ENCODE measurements at regions of chr22 and their contacts with region 1.

Region 1: DNA sequence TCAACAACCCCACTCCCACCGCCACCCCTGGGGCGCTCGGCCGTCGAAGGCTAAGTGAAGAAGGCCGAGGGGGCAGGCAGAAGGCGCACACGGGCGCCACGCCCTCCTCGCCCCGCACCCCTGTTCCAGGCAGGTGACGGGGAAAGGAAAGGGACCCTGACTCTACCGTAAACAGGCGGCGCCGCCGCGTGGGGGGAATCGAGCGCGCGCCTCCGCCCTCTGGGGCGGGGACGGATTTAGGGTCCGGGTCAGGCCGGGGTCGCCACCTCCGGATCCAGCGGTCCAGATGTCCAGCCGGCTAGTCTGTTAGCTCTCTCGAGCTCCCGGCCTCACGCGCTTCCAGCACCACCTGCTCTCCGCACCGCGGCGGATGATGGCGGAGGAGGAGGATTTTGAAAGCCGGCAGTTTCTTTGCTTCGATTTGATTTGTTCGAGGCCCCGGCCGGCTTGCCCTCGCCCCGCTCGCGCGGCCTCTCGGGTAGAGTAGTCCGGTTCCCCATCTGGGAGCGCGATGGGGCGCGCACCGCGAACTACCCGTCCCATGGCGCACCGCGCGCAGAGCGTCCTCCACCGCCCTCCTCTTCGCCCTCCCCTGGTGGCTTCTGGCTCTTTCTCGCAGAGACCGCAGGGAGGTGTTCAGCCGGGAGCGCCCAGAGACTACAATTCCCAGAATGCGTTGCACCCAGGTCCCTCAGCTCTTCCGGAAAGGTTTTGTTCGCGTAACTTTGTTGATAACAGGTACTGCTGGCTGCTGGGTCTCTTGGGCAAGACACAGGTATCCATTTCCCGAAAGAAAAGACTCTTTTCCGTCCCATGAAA is at the start of gene RANGAP1:
- DNase-seq: peak; percentile 98
- H3K4me3 Mint-ChIP-seq: peak within 1 kb of the TSS; percentile 95
- H3K27ac Mint-ChIP-seq: peak within 1 kb of the TSS; percentile 97
- H3K4me1 Mint-ChIP-seq: peaks cover 34% of the 10 kb centered on the region
- H3K27me3 Mint-ChIP-seq: no peaks in the 10 kb centered on the region
- total RNA-seq, gene RANGAP1: 197 and 199 TPM in 2 replicates

Region 2: GRCh38 chr22:40636380-40637182 is 649.4 kb before region 1 on chr22 and contains the start of gene MRTFA:
- intact Hi-C with region 1: loop called (anchors 1 kb)
- DNase-seq: peak; percentile 100
- H3K4me3 Mint-ChIP-seq: peak within 1 kb of the TSS; percentile 94
- H3K27ac Mint-ChIP-seq: peak within 1 kb of the TSS; percentile 94
- H3K4me1 Mint-ChIP-seq: peaks cover 27% of the 10 kb centered on the region
- H3K27me3 Mint-ChIP-seq: no peaks in the 10 kb centered on the region
- total RNA-seq, gene MRTFA: 47.4 and 47.8 TPM in 2 replicates

Region 3: DNA sequence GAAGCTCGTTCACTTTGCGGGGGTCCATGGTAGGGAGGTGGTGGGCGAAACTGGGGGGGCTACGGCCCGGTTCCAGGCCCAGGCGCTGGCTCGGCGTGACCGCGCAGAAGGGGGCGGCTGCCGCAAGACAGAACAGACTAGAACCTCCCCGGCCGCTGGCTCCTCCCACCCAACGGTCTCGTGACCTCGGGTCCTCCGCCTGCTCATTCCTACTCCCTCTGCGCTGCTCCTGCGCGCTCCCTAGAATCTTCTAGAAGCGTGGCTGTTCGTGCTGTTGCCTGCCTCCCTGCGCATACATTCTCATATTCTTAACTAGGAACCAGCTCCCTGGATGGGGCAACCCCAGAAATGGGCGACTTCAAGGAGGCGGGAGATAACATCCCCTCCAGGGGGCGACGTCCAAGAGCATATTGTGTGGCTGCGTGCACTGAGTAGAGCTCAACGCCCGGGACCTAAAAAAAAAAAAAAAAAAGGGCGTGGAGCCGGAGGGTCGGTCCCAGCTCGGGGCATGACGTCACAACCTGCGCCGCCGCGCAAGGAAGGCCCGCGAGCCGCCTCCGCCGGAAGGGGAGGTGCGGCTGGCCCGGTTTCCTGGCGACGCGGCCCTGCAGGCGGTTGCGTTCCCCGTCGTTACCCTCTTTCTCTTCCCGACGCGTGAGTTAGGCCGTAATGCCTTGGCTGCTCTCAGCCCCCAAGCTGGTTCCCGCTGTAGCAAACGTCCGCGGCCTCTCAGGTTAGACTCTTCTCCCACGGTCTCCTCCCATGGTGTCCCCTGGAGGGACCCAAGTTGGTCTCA is 429.3 kb before region 1 on chr22 and contains the starts of genes ST13 and XPNPEP3:
- intact Hi-C with region 1: loop called (anchors 1 kb)
- DNase-seq: peak; percentile 96
- H3K4me3 Mint-ChIP-seq: peak within 1 kb of the TSS; percentile 98
- H3K27ac Mint-ChIP-seq: peak within 1 kb of the TSS; percentile 100
- H3K4me1 Mint-ChIP-seq: peaks cover 38% of the 10 kb centered on the region
- H3K27me3 Mint-ChIP-seq: no peaks in the 10 kb centered on the region
- total RNA-seq, gene ST13: 190 and 192 TPM in 2 replicates
- total RNA-seq, gene XPNPEP3: 14.7 and 15.3 TPM in 2 replicates

Region 4: DNA sequence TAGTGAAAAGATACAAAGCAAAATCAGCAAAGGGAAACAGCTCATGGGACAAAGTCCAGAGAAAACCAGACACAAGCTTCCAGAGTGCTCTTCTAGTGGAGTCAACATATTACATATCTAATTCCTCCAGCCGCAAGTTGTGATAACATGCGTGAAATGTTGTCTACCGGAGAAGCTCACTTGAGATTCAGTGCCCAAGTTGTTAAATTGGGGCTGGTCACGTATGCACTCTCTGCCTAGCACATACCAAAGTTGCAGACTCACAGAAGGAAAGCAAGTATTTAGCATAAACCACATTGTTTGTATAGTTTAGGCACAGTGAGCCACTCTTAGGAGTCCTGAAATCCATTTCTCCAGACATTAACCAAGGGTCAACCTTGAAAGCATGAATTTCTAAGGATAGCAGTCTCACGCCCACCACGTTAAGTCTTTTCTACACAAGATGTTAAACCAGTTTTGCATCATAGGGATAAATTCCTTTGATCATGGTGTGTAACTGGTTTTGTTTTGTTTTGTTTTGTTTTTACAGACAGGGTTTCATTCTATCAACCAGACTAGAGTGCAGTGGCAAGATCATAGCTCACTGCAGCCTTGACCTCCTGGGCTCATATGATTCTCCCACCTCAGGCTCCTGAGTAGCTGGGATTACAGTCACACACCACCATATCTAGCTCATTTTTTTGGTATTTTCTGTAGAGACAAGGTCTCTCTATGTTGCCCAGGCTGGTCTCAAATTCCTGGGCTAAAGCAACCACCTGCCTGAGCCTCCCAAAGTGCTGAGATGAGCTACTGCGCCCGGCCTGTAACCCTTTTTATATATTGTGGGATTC is 233.2 kb before region 1 on chr22:
- intact Hi-C with region 1: no loop called
- DNase-seq: no peak
- H3K4me3 Mint-ChIP-seq: no peak overlapping the region
- H3K27ac Mint-ChIP-seq: no peak overlapping the region
- H3K4me1 Mint-ChIP-seq: peaks cover 7% of the 10 kb centered on the region
- H3K27me3 Mint-ChIP-seq: no peaks in the 10 kb centered on the region

Region 5: GRCh38 chr22:41197038-41197972 is 88.7 kb before region 1 on chr22:
- intact Hi-C with region 1: loop called (anchors 2 kb)
- DNase-seq: peak; percentile 78
- H3K4me3 Mint-ChIP-seq: peak overlapping the region; percentile 88
- H3K27ac Mint-ChIP-seq: no peak overlapping the region
- H3K4me1 Mint-ChIP-seq: peaks cover 14% of the 10 kb centered on the region
- H3K27me3 Mint-ChIP-seq: peaks cover 35% of the 10 kb centered on the region

Region 6: DNA sequence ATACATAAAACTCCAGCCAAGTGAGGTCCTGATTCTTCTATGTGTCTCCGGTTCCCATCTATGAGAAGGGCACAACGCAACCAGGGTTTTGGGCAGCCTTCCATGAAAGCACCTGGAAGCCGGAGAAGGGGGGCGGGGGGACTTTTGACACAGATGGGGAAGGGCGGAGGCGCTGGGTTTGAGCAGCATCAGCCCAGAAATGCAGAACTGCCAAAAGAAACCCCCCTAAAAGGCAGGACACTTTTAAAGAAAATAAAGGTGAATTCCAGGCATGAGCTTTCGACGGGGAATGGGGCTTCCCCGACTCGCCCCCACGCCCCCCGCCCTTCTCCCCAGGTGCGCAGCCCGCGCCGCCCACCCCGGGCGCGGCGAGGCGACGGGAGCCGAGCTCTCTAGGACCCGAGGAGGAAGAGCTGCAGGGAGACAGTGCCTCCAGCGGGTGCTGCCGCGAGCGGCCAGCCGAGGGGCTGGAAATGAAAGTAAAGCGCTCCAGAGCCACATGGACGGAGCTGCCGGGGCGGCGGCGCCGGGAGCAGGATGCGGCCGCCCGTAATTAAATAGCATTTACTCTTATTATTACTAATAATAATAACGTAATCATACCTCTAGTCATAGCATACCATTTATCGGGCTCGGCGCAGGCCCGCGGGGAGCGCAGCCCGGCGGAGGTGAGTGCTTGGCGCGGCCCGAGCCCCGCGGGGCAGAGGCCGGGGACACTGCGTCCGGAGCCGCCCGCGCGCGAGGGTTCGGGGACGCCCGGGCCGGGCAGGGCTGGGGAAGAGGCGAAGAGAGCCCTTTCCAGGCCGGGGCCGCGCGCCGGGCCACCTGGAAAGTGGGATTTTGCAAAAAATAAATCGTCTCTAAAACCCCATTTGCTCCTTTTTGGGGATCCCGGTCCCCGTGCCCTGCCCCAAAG is 15.3 kb after region 1 on chr22 and contains the start of gene ZC3H7B:
- intact Hi-C with region 1: loop called (anchors 1 kb)
- DNase-seq: peak; percentile 81
- H3K4me3 Mint-ChIP-seq: peak within 1 kb of the TSS; percentile 87
- H3K27ac Mint-ChIP-seq: peak within 1 kb of the TSS; percentile 82
- H3K4me1 Mint-ChIP-seq: peaks cover 36% of the 10 kb centered on the region
- H3K27me3 Mint-ChIP-seq: no peaks in the 10 kb centered on the region
- total RNA-seq, gene ZC3H7B: 77.1 and 79.0 TPM in 2 replicates

Region 7: DNA sequence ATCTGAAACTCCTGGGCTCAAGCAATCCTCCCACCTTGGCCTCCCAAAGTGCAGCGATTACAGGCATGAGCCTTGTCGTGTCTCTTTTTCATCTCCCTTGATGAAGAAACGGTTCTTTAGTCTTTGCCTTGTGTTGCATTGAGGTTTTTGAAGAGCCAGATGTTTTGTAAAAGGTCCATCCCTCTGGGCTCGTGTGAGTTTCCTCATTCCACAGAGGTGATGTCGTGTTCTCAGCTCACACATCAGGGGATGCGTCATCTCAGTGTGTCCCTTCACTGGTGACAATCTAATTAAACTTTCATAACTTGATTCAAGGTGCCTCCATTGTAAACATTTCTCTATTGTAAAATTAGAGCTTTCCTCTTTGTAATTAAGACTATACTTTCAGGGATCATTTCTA is 66.0 kb after region 1 on chr22:
- intact Hi-C with region 1: no loop called
- DNase-seq: no peak
- H3K4me3 Mint-ChIP-seq: no peak overlapping the region
- H3K27ac Mint-ChIP-seq: no peak overlapping the region
- H3K4me1 Mint-ChIP-seq: no peaks in the 10 kb centered on the region
- H3K27me3 Mint-ChIP-seq: no peaks in the 10 kb centered on the region

Region 8: DNA sequence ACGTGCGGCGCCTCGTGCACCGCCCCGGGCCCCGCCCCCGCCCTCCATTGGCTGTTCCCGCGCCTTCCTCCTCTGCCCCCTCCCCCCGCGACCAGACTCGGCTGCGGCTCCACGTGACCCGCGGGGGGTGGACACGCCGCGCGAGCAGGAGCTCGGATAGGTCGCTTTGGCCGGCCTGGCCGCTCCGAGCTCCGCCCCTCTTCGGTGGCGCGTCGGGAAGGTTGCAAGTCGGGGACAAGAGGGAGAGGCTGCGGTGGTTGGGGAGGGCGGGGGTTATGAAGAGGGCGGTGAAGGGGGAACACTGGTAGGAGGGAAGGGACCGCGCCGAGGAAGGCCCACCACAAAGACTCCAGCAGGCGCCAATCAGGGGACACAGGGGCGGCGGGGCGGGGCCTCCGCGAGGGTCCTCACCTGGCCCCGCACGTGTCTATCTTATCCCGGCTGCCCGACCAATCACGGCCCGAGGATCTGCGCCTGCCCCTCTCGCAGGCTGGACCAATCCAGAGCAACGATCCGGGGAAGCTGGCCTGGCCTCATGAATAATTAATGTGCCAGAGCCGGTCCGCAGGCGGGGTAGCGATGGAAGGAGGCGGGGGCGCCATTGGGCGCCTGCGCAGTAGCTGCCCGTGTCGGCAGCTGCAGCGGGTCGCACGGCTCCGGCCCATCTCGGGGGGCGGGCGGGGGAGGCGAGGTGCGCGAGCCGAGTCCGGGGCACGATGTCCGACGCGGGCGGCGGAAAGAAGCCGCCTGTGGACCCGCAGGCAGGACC is 95.5 kb after region 1 on chr22 and contains the start of gene TEF:
- intact Hi-C with region 1: loop called (anchors 1 kb)
- DNase-seq: peak; percentile 97
- H3K4me3 Mint-ChIP-seq: peak within 1 kb of the TSS; percentile 85
- H3K27ac Mint-ChIP-seq: peak within 1 kb of the TSS; percentile 93
- H3K4me1 Mint-ChIP-seq: peaks cover 6% of the 10 kb centered on the region
- H3K27me3 Mint-ChIP-seq: no peaks in the 10 kb centered on the region
- total RNA-seq, gene TEF: 1.6 and 2.1 TPM in 2 replicates

Region 9: DNA sequence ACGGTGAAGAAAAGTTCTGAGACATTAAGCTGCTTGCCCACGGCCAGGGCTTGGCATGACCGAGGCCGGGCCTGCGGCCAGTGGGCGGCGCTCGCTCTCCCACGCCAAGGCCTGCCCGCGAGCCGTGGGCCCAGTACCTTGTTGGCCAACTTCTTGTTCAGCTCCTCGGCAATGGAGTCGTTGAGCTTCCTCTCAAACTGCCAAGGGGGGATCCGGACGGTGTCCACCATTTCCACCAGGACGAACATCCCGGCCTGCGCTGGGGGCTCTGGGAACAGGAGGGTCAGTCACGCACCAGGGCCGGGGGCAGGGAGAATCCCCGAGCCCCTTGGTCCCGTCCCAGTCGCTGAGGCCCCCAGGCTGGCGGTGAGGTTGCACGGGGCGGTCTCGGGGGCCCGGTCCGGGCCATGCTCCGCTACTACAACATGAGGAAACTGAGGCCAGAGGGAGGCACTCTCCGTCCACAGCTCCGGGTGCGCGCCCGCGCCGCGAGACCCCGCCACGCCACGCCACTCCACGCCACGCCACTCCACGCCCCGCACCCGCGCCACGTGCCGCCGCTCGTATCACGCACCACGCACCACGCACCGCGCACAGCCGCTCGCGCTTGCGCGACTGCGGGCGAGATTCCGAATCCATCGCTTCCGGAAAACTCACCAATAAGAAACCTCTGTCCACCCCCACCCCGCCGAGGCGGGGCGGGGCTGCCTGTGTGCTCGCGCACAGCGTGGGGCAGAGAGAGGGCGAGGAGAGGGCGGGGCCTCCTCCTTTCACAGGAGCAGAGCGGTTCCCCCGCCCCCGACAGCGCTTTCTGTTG is 258.0 kb after region 1 on chr22 and contains the start of gene POLR3H:
- intact Hi-C with region 1: loop called (anchors 1 kb)
- DNase-seq: peak; percentile 97
- H3K4me3 Mint-ChIP-seq: peak within 1 kb of the TSS; percentile 93
- H3K27ac Mint-ChIP-seq: peak within 1 kb of the TSS; percentile 84
- H3K4me1 Mint-ChIP-seq: peaks cover 40% of the 10 kb centered on the region
- H3K27me3 Mint-ChIP-seq: peaks cover 3% of the 10 kb centered on the region
- total RNA-seq, gene POLR3H: 51.8 and 52.0 TPM in 2 replicates